Cardiac septum (tissue), 1 donor: ENCODE measurements at regions of chr6 and their contacts with region 1.

Region 1: GRCh38 chr6:146857180-146857979 is 258.6 kb downstream of the ADGB start:
- DNase-seq: peak; percentile 94

Region 2: GRCh38 chr6:146613947-146614346 is 243.4 kb before region 1 on chr6:
- intact Hi-C with region 1: no loop called
- DNase-seq: no peak

Region 3: GRCh38 chr6:147202516-147203312 is 345.3 kb after region 1 on chr6:
- intact Hi-C with region 1: loop called (anchors 2 kb)
- DNase-seq: peak; percentile 90

Region 4: GRCh38 chr6:147285087-147285855 is 427.9 kb after region 1 on chr6:
- intact Hi-C with region 1: loop called (anchors 1 kb)
- DNase-seq: no peak